ENCODE measurements at regions of chr3 and their contacts with region 1.

Region 1: GRCh38 chr3:188918066-188918465 is 253.7 kb upstream of the TPRG1 start:
- DNase-seq: peak; percentile 47 to 74
- H3K4me3 ChIP-seq: no peak overlapping the region
- H3K4me3 Mint-ChIP-seq: peak overlapping the region; percentile 46
- H3K27ac Mint-ChIP-seq: peak overlapping the region; percentile 62
- H3K4me1 ChIP-seq: peaks cover 37% of the 10 kb centered on the region
- H3K4me1 Mint-ChIP-seq: peaks cover 42% of the 10 kb centered on the region
- H3K27me3 ChIP-seq: no peaks in the 10 kb centered on the region
- H3K27me3 Mint-ChIP-seq: no peaks in the 10 kb centered on the region
- CTCF ChIP-seq: no peak

Region 2: GRCh38 chr3:188881954-188882641 is 36.0 kb before region 1 on chr3:
- CTCF ChIA-PET with region 1: no interaction called
- POLR2A ChIA-PET with region 1: no interaction called
- intact Hi-C with region 1: loop called (anchors 1 kb)
- DNase-seq: no peak
- H3K4me3 ChIP-seq: no peak overlapping the region
- H3K4me3 Mint-ChIP-seq: no peak overlapping the region
- H3K27ac Mint-ChIP-seq: peak overlapping the region; percentile 84
- H3K4me1 ChIP-seq: peaks cover 14% of the 10 kb centered on the region
- H3K4me1 Mint-ChIP-seq: peaks cover 14% of the 10 kb centered on the region
- H3K27me3 ChIP-seq: no peaks in the 10 kb centered on the region
- H3K27me3 Mint-ChIP-seq: no peaks in the 10 kb centered on the region
- CTCF ChIP-seq: no peak

Region 3: DNA sequence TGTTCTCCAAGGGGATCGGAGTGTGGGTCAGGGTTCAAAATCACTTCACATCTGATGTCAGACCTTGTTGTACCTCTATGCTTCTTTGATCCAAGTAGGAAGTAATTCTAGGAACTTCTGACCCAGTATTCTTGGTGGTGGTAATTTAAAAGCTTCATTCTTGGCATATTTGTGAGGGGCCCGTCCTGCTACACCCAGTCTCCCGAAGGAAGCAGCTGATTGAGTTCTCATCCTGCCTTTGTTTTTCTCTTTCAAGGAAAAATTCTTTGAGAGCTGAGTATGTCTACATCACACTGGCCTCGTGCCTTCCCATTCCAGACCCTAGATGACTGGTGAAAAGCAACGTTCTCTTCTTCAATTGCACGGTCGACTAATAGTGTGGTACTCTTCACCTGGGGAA is 19.3 kb after region 1 on chr3:
- CTCF ChIA-PET with region 1: no interaction called
- POLR2A ChIA-PET with region 1: no interaction called
- intact Hi-C with region 1: loop called (anchors 1 kb)
- DNase-seq: peak; percentile 18 to 47
- H3K4me3 ChIP-seq: no peak overlapping the region
- H3K4me3 Mint-ChIP-seq: peak overlapping the region; percentile 36
- H3K27ac Mint-ChIP-seq: peak overlapping the region; percentile 47
- H3K4me1 ChIP-seq: peaks cover 19% of the 10 kb centered on the region
- H3K4me1 Mint-ChIP-seq: peaks cover 22% of the 10 kb centered on the region
- H3K27me3 ChIP-seq: no peaks in the 10 kb centered on the region
- H3K27me3 Mint-ChIP-seq: no peaks in the 10 kb centered on the region
- CTCF ChIP-seq: no peak

Region 4: DNA sequence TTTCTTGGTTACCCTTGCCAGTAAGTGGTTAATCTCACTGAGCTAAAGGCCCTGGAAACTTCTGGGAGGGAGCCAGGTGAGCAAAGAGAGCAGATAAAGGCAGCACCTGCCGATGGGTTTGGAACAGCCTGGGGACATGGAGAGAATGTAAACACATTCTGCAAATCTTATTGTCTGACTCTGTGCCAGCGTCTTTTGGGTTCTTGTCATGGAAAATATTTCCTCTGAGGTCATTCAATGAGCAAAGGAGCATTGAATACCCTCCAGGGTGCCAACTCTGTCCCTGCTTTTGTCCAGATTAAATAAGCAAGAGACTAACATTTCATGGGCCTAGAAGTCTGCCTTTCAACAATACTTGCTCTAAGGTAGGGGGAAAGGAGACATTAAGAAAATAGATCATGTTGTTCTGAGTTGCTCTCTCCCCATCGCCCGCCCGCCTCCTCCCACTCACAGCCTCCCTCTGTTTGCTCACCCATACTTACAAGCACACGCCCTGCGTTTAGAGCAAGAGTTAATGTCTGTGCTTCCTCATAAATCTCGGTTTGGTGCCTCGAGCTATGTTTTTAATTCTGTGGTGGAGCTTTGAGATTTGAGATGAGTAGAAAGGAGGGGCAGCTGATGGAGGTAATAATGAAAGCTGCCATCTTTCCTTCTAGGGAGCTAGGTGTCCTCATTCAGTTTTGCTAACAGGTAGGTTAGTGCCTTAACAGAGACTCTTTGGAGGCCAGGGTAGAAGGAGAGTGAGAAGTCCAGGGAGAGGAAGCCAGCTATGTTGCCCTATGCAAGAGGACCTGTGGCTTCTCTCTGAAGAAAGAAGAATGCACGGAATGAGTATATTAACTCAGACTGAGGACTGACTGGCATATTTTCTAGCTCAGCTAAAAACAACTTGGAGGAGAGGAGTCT is 386.6 kb after region 1 on chr3:
- CTCF ChIA-PET with region 1: no interaction called
- POLR2A ChIA-PET with region 1: no interaction called
- intact Hi-C with region 1: no loop called
- DNase-seq: peak; percentile 72 to 77
- H3K4me3 ChIP-seq: no peak overlapping the region
- H3K4me3 Mint-ChIP-seq: peak overlapping the region; percentile 56
- H3K27ac Mint-ChIP-seq: peak overlapping the region; percentile 91
- H3K4me1 ChIP-seq: peaks cover 24% of the 10 kb centered on the region
- H3K4me1 Mint-ChIP-seq: peaks cover 21% of the 10 kb centered on the region
- H3K27me3 ChIP-seq: no peaks in the 10 kb centered on the region
- H3K27me3 Mint-ChIP-seq: no peaks in the 10 kb centered on the region
- CTCF ChIP-seq: no peak

Measured in Caco-2 (cell line).